HepG2 (cell line): ENCODE measurements at regions of chr14 and their contacts with region 1.

Region 1: GRCh38 chr14:24114536-24115450 is at the starts of genes DCAF11 and NRL:
- DNase-seq: peak; percentile 100
- ATAC-seq: peak; percentile 88
- H3K4me3 ChIP-seq: peak within 1 kb of the TSS; percentile 66 to 96 (median 85)
- H3K27ac ChIP-seq: peak within 1 kb of the TSS; percentile 98
- H3K4me1 ChIP-seq: peaks cover 48% of the 10 kb centered on the region
- H3K27me3 ChIP-seq: no peaks in the 10 kb centered on the region; a peak in 1 of 5 replicates
- CTCF ChIP-seq: peak; percentile 50
- EP300 ChIP-seq: peak in 1 of 2 experiments; percentile 77; a peak in 2 of 4 replicates
- POLR2A ChIP-seq: peak in 1 of 2 experiments; percentile 97; a peak in 2 of 4 replicates
- RAD21 ChIP-seq: peak; percentile 78
- total RNA-seq, gene DCAF11: 257 and 342 TPM in 2 replicates
- total RNA-seq, gene NRL: 4.7 and 5.2 TPM in 2 replicates

Region 2: GRCh38 chr14:22252686-22253085 is 1862.1 kb before region 1 on chr14:
- CTCF ChIA-PET with region 1: no interaction called
- POLR2A ChIA-PET with region 1: no interaction called
- in situ Hi-C with region 1: no loop called
- intact Hi-C with region 1: no loop called
- DNase-seq: no peak
- ATAC-seq: no peak
- H3K4me3 ChIP-seq: no peak overlapping the region
- H3K27ac ChIP-seq: no peak overlapping the region
- H3K4me1 ChIP-seq: no peaks in the 10 kb centered on the region
- H3K27me3 ChIP-seq: peaks cover 0 to 6% of the 10 kb centered on the region in 2 experiments; a peak in 1 of 5 replicates
- CTCF ChIP-seq: no peak
- EP300 ChIP-seq: no peak
- POLR2A ChIP-seq: no peak
- RAD21 ChIP-seq: no peak

Region 3: DNA sequence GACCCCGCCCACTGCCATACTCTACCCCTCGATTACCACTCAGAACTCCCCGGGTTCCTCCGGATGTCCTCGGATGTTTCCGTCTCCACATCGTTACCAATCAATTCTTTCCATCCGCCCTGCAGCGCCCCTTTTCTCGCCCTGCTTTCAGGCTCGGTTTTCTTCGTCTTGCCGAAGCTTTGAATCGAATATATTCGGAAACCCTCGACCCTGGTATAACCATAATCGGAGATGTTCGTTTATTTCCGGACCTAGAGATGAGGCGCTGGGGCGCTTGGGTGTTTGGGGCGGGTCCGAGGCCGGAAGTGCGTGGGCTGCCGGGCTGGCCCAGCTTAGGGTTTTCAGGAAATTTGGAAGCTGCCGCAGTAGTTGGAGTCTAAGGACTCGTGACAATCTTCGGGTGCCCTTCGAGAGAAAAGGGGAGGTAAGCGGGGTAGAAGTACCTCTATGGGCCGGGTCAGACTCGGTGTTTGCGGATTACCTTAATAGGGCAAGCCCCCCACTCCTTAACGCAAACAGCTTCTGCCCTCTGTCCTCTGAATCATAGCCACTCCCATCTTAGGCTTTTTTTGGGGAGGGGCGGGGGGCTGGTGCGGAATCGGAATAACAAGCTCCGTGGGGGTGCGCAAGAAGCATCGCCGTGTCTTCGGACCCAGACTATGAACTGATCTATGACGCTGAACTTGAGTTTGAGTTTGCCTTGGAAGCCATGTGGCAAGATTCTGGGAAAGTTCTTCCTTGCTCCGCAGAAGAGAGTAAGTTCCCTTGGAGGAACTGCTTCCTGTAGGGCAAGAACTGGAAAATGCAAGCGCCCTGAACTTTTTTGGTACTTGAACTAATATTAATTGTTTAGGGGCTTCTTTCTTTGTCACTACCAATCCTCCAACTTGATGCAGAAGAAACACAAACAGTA is 1019.3 kb before region 1 on chr14 and contains the start of gene C14orf119:
- CTCF ChIA-PET with region 1: no interaction called
- POLR2A ChIA-PET with region 1: interaction called, 18 read pairs
- in situ Hi-C with region 1: no loop called
- intact Hi-C with region 1: loop called (anchors 10 kb)
- DNase-seq: peak; percentile 100
- ATAC-seq: peak; percentile 92
- H3K4me3 ChIP-seq: peak within 1 kb of the TSS; percentile 71 to 96 (median 95)
- H3K27ac ChIP-seq: peak within 1 kb of the TSS; percentile 89
- H3K4me1 ChIP-seq: peaks cover 37% of the 10 kb centered on the region
- H3K27me3 ChIP-seq: no peaks in the 10 kb centered on the region; a peak in 1 of 5 replicates
- CTCF ChIP-seq: peak; percentile 16; the same call in 1 of the 2 replicates
- EP300 ChIP-seq: no peak; a peak in 2 of 4 replicates
- POLR2A ChIP-seq: peak in 1 of 2 experiments; percentile 55; a peak in 2 of 4 replicates
- RAD21 ChIP-seq: peak; percentile 42; the same call in 1 of the 2 replicates
- total RNA-seq, gene C14orf119: 206 and 299 TPM in 2 replicates

Region 4: GRCh38 chr14:24013654-24014514 is 100.9 kb before region 1 on chr14:
- CTCF ChIA-PET with region 1: interaction called, 28 read pairs
- POLR2A ChIA-PET with region 1: interaction called, 9 read pairs
- in situ Hi-C with region 1: no loop called
- intact Hi-C with region 1: loop called (anchors 1 kb)
- DNase-seq: peak; percentile 92
- ATAC-seq: peak; percentile 98
- H3K4me3 ChIP-seq: no peak overlapping the region
- H3K27ac ChIP-seq: no peak overlapping the region
- H3K4me1 ChIP-seq: peaks cover 53% of the 10 kb centered on the region
- H3K27me3 ChIP-seq: no peaks in the 10 kb centered on the region
- CTCF ChIP-seq: peak; percentile 100
- EP300 ChIP-seq: peak in 1 of 2 experiments; percentile 11; a peak in 1 of 4 replicates
- POLR2A ChIP-seq: no peak
- RAD21 ChIP-seq: peak; percentile 100

Region 5: DNA sequence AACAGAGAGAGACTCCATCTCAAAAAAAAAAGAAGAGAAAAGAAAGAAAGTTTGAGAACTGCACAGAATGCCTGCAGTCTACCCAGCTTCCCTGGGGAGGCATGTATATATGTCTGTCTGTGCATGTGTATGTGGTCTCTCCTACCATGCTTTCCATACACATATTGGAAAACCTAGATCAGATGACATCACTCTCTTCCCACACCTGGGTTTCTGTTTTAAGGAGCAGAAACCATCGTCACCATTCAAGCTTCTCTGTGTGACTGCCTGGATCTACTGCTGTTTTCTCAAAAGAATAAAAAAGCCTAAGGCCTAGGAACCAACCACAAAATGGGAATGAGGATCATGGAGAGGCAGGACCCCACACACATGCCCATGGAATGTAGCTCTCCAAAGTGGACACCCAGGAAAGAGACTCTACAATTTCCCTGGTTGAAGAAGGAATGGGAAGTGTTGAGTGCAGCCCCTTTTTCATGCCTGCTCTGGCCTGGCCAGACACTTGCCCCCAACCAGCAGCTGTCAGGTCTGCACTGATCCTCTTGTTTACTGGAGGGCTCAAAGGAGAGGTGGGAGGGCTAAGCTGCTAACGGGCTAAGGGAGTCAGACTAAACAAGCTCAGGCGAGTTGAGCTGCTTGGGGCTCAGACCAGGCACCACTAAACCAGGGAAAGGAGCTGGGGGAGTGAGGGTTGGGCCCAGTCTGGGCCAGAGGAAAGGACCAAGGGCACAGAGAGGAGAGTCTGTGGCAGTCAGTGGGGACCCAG is 28.4 kb before region 1 on chr14:
- CTCF ChIA-PET with region 1: interaction called, 31 read pairs
- POLR2A ChIA-PET with region 1: interaction called, 627 read pairs
- in situ Hi-C with region 1: no loop called
- intact Hi-C with region 1: no loop called
- DNase-seq: no peak
- ATAC-seq: no peak
- H3K4me3 ChIP-seq: no peak overlapping the region
- H3K27ac ChIP-seq: no peak overlapping the region
- H3K4me1 ChIP-seq: peaks cover 39% of the 10 kb centered on the region
- H3K27me3 ChIP-seq: peaks cover 10 to 45% of the 10 kb centered on the region in 2 experiments
- CTCF ChIP-seq: no peak
- EP300 ChIP-seq: no peak
- POLR2A ChIP-seq: no peak
- RAD21 ChIP-seq: no peak

Region 6: GRCh38 chr14:24160850-24161804 is 46.3 kb after region 1 on chr14 and contains the start of gene IRF9:
- CTCF ChIA-PET with region 1: interaction called, 4 read pairs
- POLR2A ChIA-PET with region 1: interaction called, 110 read pairs
- in situ Hi-C with region 1: no loop called
- intact Hi-C with region 1: loop called (anchors 1 kb)
- DNase-seq: peak; percentile 99
- ATAC-seq: peak; percentile 92
- H3K4me3 ChIP-seq: peak within 1 kb of the TSS; percentile 50 to 78 (median 64)
- H3K27ac ChIP-seq: peak within 1 kb of the TSS; percentile 62
- H3K4me1 ChIP-seq: peaks cover 28% of the 10 kb centered on the region
- H3K27me3 ChIP-seq: no peaks in the 10 kb centered on the region; a peak in 1 of 5 replicates
- CTCF ChIP-seq: peak; percentile 100
- EP300 ChIP-seq: peak; percentile 55 to 85; a peak in 3 of 4 replicates
- POLR2A ChIP-seq: peak in 1 of 2 experiments; percentile 66; a peak in 2 of 4 replicates
- RAD21 ChIP-seq: peak; percentile 99
- total RNA-seq, gene IRF9: 13.8 and 14.9 TPM in 2 replicates

Region 7: DNA sequence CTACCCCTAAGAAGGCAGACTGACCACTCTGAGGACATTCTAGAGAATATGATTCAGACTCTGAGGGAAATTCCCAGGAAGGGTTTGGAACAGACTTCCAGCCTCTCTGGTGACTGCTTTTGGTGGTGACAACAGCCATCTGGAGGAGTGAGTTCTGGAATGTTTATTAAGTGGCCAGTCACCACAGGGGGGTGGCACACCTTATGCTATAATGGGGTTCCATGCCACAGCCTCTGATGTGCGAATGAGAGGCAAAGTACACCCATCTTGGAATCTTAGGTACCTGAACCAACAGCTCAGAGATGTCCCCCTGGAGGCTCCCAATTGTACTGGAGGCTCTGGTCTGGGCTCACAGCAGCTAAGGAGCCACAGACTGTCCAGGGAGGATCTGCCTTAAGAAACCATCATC is 137.1 kb after region 1 on chr14:
- CTCF ChIA-PET with region 1: no interaction called
- POLR2A ChIA-PET with region 1: interaction called, 12 read pairs
- in situ Hi-C with region 1: no loop called
- intact Hi-C with region 1: no loop called
- DNase-seq: no peak
- ATAC-seq: peak; percentile 32
- H3K4me3 ChIP-seq: no peak overlapping the region
- H3K27ac ChIP-seq: peak overlapping the region; percentile 59
- H3K4me1 ChIP-seq: peaks cover 35% of the 10 kb centered on the region
- H3K27me3 ChIP-seq: no peaks in the 10 kb centered on the region
- CTCF ChIP-seq: no peak
- EP300 ChIP-seq: no peak
- POLR2A ChIP-seq: 0 out of 4 replicates have a peak, but pooled peaks of 1 of the 2 experiments have one; percentile 2
- RAD21 ChIP-seq: no peak

Region 8: GRCh38 chr14:24504425-24504950 is 389.7 kb after region 1 on chr14:
- CTCF ChIA-PET with region 1: no interaction called
- POLR2A ChIA-PET with region 1: no interaction called
- in situ Hi-C with region 1: no loop called
- intact Hi-C with region 1: no loop called
- DNase-seq: no peak
- ATAC-seq: no peak
- H3K4me3 ChIP-seq: no peak overlapping the region
- H3K27ac ChIP-seq: no peak overlapping the region
- H3K4me1 ChIP-seq: no peaks in the 10 kb centered on the region
- H3K27me3 ChIP-seq: 0 out of 5 replicates have a peak, but pooled peaks cover 0 to 6% of the 10 kb centered on the region in 2 experiments
- CTCF ChIP-seq: no peak
- EP300 ChIP-seq: no peak
- POLR2A ChIP-seq: no peak
- RAD21 ChIP-seq: no peak